CD4-positive, alpha-beta T cell (primary cell): ENCODE measurements at regions of chr17 and their contacts with region 1.

Region 1: GRCh38 chr17:64320613-64321553 is 57.8 kb upstream of the TEX2 start:
- DNase-seq: peak; percentile 25 to 82 (median 46)
- ATAC-seq: peak; percentile 69
- H3K4me3 ChIP-seq: peak overlapping the region; percentile 14
- H3K4me3 Mint-ChIP-seq: no peak overlapping the region
- H3K27ac ChIP-seq: no peak overlapping the region
- H3K27ac Mint-ChIP-seq: peak overlapping the region; percentile 35
- H3K4me1 ChIP-seq: peaks cover 9% of the 10 kb centered on the region
- H3K4me1 Mint-ChIP-seq: peaks cover 17% of the 10 kb centered on the region
- H3K27me3 ChIP-seq: no peaks in the 10 kb centered on the region
- H3K27me3 Mint-ChIP-seq: peaks cover 4% of the 10 kb centered on the region
- CTCF ChIP-seq: peak; percentile 85

Region 2: GRCh38 chr17:64373722-64374121 is 52.8 kb after region 1 on chr17:
- CTCF ChIA-PET with region 1: no interaction called
- POLR2A ChIA-PET with region 1: no interaction called
- intact Hi-C with region 1: loop called in 1 of 2 experiments (anchors 5 kb)
- DNase-seq: no peak
- ATAC-seq: no peak
- H3K4me3 ChIP-seq: no peak overlapping the region
- H3K4me3 Mint-ChIP-seq: no peak overlapping the region
- H3K27ac ChIP-seq: no peak overlapping the region
- H3K27ac Mint-ChIP-seq: no peak overlapping the region
- H3K4me1 ChIP-seq: no peaks in the 10 kb centered on the region
- H3K4me1 Mint-ChIP-seq: no peaks in the 10 kb centered on the region
- H3K27me3 ChIP-seq: no peaks in the 10 kb centered on the region
- H3K27me3 Mint-ChIP-seq: no peaks in the 10 kb centered on the region
- CTCF ChIP-seq: no peak

Region 3: GRCh38 chr17:64491034-64491859 is 170.4 kb after region 1 on chr17:
- CTCF ChIA-PET with region 1: interaction called, 3 read pairs
- POLR2A ChIA-PET with region 1: no interaction called
- intact Hi-C with region 1: loop called (anchors 5 kb)
- DNase-seq: peak in 13 of 14 experiments; percentile 22 to 78 (median 37)
- ATAC-seq: peak; percentile 75
- H3K4me3 ChIP-seq: no peak overlapping the region
- H3K4me3 Mint-ChIP-seq: no peak overlapping the region
- H3K27ac ChIP-seq: no peak overlapping the region
- H3K27ac Mint-ChIP-seq: no peak overlapping the region
- H3K4me1 ChIP-seq: peaks cover 23% of the 10 kb centered on the region
- H3K4me1 Mint-ChIP-seq: peaks cover 25% of the 10 kb centered on the region
- H3K27me3 ChIP-seq: no peaks in the 10 kb centered on the region
- H3K27me3 Mint-ChIP-seq: no peaks in the 10 kb centered on the region
- CTCF ChIP-seq: peak; percentile 69

Region 4: GRCh38 chr17:64496786-64497564 is 176.1 kb after region 1 on chr17 and contains the start of gene POLG2:
- CTCF ChIA-PET with region 1: no interaction called
- POLR2A ChIA-PET with region 1: no interaction called
- intact Hi-C with region 1: loop called in 1 of 2 experiments (anchors 5 kb)
- DNase-seq: peak; percentile 93 to 99 (median 95)
- ATAC-seq: peak; percentile 77
- H3K4me3 ChIP-seq: peak within 1 kb of the TSS; percentile 77
- H3K4me3 Mint-ChIP-seq: peak within 1 kb of the TSS; percentile 100
- H3K27ac ChIP-seq: peak within 1 kb of the TSS; percentile 85 to 91
- H3K27ac Mint-ChIP-seq: peak within 1 kb of the TSS; percentile 99
- H3K4me1 ChIP-seq: peaks cover 44% of the 10 kb centered on the region
- H3K4me1 Mint-ChIP-seq: peaks cover 83% of the 10 kb centered on the region
- H3K27me3 ChIP-seq: no peaks in the 10 kb centered on the region
- H3K27me3 Mint-ChIP-seq: no peaks in the 10 kb centered on the region
- CTCF ChIP-seq: peak; percentile 56
- total RNA-seq, gene POLG2: 32.8 to 34.1 TPM

Region 5: DNA sequence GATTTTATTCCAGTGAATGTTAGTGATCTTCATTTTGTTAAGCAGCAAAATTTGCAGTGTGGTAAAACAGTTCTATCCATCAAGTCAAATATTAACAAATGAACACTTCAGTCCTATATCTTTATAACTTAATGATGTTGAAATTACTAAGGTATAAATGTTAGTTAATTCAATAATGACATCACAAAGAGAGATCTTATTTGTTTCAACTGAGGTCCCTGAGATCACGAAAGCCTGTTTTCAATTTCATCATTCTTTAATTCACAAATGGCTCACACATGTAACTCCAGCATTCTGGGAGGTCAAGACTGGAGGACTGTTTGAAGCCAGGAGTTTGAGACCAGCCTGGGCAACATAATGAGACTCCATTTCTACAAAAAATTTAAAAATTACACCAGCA is 327.4 kb after region 1 on chr17:
- CTCF ChIA-PET with region 1: no interaction called
- POLR2A ChIA-PET with region 1: no interaction called
- intact Hi-C with region 1: loop called in 1 of 2 experiments (anchors 5 kb)
- DNase-seq: no peak
- ATAC-seq: no peak
- H3K4me3 ChIP-seq: no peak overlapping the region
- H3K4me3 Mint-ChIP-seq: no peak overlapping the region
- H3K27ac ChIP-seq: no peak overlapping the region
- H3K27ac Mint-ChIP-seq: no peak overlapping the region
- H3K4me1 ChIP-seq: peaks cover 3% of the 10 kb centered on the region
- H3K4me1 Mint-ChIP-seq: peaks cover 59% of the 10 kb centered on the region
- H3K27me3 ChIP-seq: no peaks in the 10 kb centered on the region
- H3K27me3 Mint-ChIP-seq: no peaks in the 10 kb centered on the region
- CTCF ChIP-seq: no peak

Region 6: DNA sequence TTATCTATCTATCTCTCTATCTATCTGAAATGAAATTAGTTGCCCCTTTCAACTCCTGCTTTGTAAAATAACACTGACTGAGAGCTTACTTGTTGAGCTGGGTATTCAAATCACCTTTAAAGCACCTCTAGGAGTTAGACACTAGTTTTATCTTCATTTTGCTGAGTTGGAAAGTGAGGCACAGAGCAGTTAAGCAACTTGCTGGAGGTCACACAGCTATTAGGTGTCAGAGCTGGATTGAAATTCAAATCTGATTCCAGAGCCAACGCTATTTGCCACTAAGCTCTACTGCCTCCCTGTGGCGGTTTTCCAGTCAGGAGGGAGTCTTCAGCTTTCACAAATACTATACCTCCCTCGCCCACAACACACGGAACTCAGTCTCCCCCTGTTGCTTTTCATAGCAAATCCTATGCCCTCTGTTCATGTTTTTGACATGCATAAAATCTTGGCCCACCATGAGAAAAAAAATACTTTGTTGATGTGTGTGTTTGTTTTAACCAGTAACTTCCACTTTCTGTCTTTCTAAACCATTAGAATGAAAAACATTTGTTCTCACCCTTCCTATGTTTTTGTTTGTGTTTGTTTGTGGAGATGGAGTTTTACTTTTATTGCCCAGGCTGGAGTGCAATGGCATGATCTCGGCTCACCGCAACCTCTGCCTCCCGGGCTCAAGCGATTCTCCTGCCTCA is 416.1 kb after region 1 on chr17:
- CTCF ChIA-PET with region 1: no interaction called
- POLR2A ChIA-PET with region 1: no interaction called
- intact Hi-C with region 1: loop called in 1 of 2 experiments (anchors 5 kb)
- DNase-seq: peak; percentile 31 to 65 (median 48)
- ATAC-seq: peak; percentile 88
- H3K4me3 ChIP-seq: no peak overlapping the region
- H3K4me3 Mint-ChIP-seq: no peak overlapping the region
- H3K27ac ChIP-seq: no peak overlapping the region
- H3K27ac Mint-ChIP-seq: no peak overlapping the region
- H3K4me1 ChIP-seq: no peaks in the 10 kb centered on the region
- H3K4me1 Mint-ChIP-seq: peaks cover 12% of the 10 kb centered on the region
- H3K27me3 ChIP-seq: no peaks in the 10 kb centered on the region
- H3K27me3 Mint-ChIP-seq: no peaks in the 10 kb centered on the region
- CTCF ChIP-seq: peak; percentile 74